ENCODE measurements at regions of chr10 and their contacts with region 1.

Region 1: DNA sequence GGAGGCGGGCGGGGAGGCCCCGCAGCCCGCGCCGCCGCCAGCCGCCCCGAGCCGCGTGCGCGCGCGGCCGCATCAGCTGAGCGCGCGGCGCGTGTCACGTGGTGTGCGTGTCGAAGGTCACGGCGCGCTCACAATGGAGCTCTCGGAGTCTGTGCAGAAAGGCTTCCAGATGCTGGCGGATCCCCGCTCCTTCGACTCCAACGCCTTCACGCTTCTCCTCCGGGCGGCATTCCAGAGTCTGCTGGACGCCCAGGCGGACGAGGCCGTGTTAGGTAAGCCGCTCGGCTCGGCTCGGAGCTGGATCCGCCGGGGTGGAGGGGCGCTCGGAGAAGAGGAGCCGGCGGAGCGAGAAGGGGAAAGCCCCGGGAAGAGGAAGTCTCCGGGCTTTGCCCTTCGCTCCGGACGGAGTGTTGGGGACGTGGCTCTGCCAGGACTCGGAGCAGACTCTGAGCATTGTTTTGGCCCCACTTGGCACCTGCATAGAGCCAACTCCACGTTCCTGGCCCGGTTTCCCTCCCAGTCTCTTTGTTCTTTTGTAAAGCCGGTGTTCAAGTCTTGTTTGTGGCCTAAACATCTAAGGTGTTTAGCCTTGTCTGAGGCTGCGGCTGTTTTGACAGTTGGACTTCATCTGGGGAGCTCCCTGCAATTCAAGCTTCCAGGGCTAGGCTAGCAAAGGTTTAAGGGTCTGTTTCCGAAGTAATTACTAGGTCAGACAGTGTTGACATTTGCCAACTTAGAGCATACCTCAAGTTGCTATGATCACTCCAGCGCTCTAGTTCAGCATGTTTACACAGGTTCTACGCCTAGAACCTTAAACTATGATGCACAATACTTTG is at the start of gene COMMD3:
- DNase-seq: peak; percentile 80
- H3K4me3 Mint-ChIP-seq: peak within 1 kb of the TSS; percentile 91
- H3K27ac Mint-ChIP-seq: peak within 1 kb of the TSS; percentile 86
- H3K4me1 Mint-ChIP-seq: peaks cover 30% of the 10 kb centered on the region
- H3K27me3 Mint-ChIP-seq: peaks cover 18% of the 10 kb centered on the region
- total RNA-seq, gene COMMD3: 64.5 to 69.4 TPM

Region 2: DNA sequence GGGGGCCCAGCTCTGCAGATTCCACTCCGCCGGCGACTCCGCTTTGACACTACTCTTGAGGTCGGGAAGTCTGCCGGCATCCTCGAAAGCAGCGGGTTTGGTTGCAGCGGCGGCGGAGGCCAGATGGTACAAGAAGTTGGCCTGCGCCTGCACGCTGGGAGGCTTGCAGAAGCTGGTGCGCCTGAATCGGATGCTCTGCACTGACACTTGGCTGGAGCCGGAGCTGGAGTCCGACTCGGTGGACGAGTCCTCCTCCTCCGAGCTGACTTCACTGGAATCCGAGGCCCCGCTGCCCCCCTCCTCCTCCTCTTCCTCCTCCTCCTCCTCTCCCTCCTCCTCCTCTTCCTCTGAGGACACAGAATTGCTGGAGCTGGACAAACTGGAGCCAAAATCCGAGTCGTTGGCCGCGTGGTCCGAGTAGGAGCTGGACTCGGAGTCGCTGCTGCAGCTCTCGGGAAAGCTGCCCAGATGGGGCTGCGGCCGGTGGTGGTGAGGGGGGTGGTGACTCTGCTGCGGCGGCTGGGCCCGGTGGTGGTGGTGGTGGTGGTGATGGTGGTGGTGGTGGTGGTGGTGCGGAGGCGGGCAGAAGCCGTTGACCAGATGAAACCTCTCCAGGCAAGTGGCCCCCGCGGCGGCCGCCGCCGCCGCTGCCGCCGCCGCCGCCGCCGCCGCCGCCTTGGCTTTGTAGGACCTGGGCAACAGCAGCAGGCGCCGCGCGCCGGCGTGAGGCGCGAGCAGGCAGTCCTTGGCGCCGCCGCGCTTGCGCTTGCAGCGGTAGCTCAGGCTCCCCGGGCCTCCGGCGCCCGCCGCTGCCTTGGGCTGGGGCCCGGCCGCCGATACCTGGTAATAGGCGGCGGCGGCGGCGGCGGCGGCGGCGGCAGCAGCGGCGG is 800.0 kb before region 1 on chr10:
- CTCF ChIA-PET with region 1: no interaction called
- intact Hi-C with region 1: loop called (anchors 5 kb)
- DNase-seq: peak; percentile 58
- H3K4me3 Mint-ChIP-seq: peak overlapping the region; percentile 70
- H3K27ac Mint-ChIP-seq: no peak overlapping the region
- H3K4me1 Mint-ChIP-seq: peaks cover 36% of the 10 kb centered on the region
- H3K27me3 Mint-ChIP-seq: peaks cover 76% of the 10 kb centered on the region

Region 3: GRCh38 chr10:22228943-22229801 is 87.3 kb before region 1 on chr10:
- CTCF ChIA-PET with region 1: no interaction called
- intact Hi-C with region 1: loop called (anchors 1 kb)
- DNase-seq: peak; percentile 89
- H3K4me3 Mint-ChIP-seq: peak overlapping the region; percentile 82
- H3K27ac Mint-ChIP-seq: peak overlapping the region; percentile 96
- H3K4me1 Mint-ChIP-seq: peaks cover 17% of the 10 kb centered on the region
- H3K27me3 Mint-ChIP-seq: peaks cover 5% of the 10 kb centered on the region

Region 4: GRCh38 chr10:22294695-22295094 is 21.8 kb before region 1 on chr10:
- CTCF ChIA-PET with region 1: no interaction called
- intact Hi-C with region 1: no loop called
- DNase-seq: no peak
- H3K4me3 Mint-ChIP-seq: no peak overlapping the region
- H3K27ac Mint-ChIP-seq: no peak overlapping the region
- H3K4me1 Mint-ChIP-seq: no peaks in the 10 kb centered on the region
- H3K27me3 Mint-ChIP-seq: peaks cover 11% of the 10 kb centered on the region

Region 5: GRCh38 chr10:22340362-22341189 is 24.1 kb after region 1 on chr10:
- CTCF ChIA-PET with region 1: interaction called, 3 read pairs
- intact Hi-C with region 1: loop called (anchors 1 kb)
- DNase-seq: peak; percentile 63
- H3K4me3 Mint-ChIP-seq: peak overlapping the region; percentile 88
- H3K27ac Mint-ChIP-seq: peak overlapping the region; percentile 74
- H3K4me1 Mint-ChIP-seq: peaks cover 19% of the 10 kb centered on the region
- H3K27me3 Mint-ChIP-seq: peaks cover 69% of the 10 kb centered on the region

Region 6: DNA sequence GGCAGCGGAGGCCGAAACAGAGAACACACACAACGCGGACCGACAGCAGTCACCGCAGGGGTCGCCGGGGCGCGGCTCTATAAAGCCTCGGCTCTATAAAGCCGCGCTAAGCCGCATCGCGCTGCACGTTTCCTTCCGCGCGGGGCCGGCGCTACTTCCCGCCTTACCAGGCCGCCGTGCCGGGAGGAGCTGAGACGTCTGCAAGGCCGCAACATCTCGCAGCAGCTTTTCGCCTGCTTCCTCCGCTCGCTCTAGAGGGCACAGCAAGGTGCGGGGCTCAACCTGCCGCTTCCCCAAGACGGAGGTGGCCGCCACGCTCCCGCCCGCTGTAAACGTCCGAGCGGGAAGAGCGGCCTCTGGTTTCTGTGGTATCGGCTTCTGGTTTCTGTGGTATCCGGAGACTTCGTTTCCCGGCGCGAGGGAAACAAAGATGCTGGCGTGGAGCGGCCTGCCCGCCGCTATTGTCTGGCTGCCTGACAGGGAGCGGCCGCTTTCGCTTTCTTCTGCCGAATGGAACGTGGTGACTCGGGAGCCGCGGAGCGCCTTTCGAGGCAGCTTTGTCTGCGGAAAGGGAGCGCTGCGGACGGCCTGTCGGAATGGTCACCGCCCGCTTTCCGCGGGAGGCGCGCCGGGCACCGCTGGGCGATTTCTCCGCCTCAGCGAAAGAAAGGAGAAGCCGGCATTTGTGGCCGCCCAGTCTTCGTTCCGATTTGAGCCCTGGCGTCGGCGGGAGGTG is 120.5 kb after region 1 on chr10:
- CTCF ChIA-PET with region 1: no interaction called
- intact Hi-C with region 1: loop called (anchors 5 kb)
- DNase-seq: peak; percentile 84
- H3K4me3 Mint-ChIP-seq: peak overlapping the region; percentile 84
- H3K27ac Mint-ChIP-seq: peak overlapping the region; percentile 92
- H3K4me1 Mint-ChIP-seq: peaks cover 31% of the 10 kb centered on the region
- H3K27me3 Mint-ChIP-seq: no peaks in the 10 kb centered on the region

Region 7: GRCh38 chr10:22714479-22715289 is 398.2 kb after region 1 on chr10 and contains the start of gene PIP4K2A:
- CTCF ChIA-PET with region 1: no interaction called
- intact Hi-C with region 1: loop called (anchors 5 kb)
- DNase-seq: peak; percentile 74
- H3K4me3 Mint-ChIP-seq: peak within 1 kb of the TSS; percentile 88
- H3K27ac Mint-ChIP-seq: peak within 1 kb of the TSS; percentile 79
- H3K4me1 Mint-ChIP-seq: peaks cover 27% of the 10 kb centered on the region
- H3K27me3 Mint-ChIP-seq: no peaks in the 10 kb centered on the region
- total RNA-seq, gene PIP4K2A: 68.0 to 74.1 TPM